Left lung (tissue), 14 donors: ENCODE measurements at regions of chr7 and their contacts with region 1.

Region 1: GRCh38 chr7:101688183-101688831 is 59.2 kb upstream of the MYL10 start:
- DNase-seq: peak; percentile 72 to 96 (median 81)
- ATAC-seq: peak; percentile 96
- H3K4me3 ChIP-seq: peak overlapping the region in 1 of 2 donors; percentile 31
- H3K27ac ChIP-seq: no peak overlapping the region
- H3K4me1 ChIP-seq: peaks cover 8 to 25% of the 10 kb centered on the region in 2 donors
- H3K27me3 ChIP-seq: peaks cover 0 to 4% of the 10 kb centered on the region in 2 donors
- CTCF ChIP-seq: peak; percentile 96 to 97

Region 2: DNA sequence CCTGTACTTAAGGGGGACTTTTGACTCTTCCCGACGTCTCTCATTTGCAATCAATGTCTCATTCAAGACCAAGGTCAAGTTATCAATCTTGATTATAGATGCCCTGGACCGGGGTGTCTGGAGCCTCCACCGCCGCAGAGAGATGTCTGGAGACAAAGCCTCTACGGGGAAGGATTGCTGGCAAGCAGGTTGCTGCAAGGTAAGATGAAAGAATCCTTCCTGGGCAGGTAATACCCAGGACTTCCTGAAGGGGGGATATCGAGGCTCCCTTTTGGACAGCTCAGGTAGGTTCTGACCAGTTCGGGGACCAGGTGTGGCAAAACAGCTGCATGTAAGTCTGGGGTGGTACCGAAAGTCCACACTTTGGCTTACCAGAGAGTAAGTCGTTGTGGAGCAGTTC is 116.7 kb after region 1 on chr7:
- intact Hi-C with region 1: loop called in 1 of 2 experiments (anchors 10 kb)
- DNase-seq: no peak
- ATAC-seq: peak; percentile 65
- H3K4me3 ChIP-seq: no peak overlapping the region
- H3K27ac ChIP-seq: no peak overlapping the region
- H3K4me1 ChIP-seq: peaks cover 0 to 13% of the 10 kb centered on the region in 2 donors
- H3K27me3 ChIP-seq: peaks cover 4 to 31% of the 10 kb centered on the region in 2 donors
- CTCF ChIP-seq: peak; percentile 10 to 17

Region 3: DNA sequence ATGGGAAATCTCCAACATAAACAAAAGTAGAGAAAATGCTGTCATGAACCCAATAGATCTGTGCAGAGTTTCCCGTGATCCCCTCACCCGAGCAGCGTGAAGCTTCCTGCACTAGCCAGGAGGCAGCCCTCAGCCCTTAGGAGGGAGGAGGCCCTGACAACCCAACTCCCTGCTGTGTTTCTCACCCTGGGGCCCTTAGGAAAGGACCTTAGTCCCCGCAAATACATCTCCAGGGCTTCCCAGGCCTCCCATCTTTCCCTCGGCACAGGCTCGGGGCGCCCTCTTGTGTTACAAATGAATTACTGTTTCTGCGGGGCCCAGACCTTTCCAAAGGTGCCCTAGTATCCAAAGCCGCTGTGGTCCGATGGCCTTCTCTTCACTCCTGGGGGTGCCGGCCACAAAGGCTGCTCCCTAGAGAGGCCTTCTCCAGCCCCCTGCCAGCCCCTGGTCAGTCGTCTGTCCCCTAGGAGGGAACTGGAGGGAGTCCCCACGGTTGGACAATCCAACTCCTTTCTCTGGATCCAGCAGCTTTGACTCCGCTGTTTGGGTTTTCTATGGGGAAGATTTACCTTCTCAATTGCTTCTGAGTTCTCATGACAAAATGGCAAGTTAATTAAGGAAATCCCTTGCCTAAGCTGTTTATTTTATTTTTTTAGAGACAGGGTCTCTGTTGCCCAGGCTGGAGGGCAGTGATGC is 548.4 kb after region 1 on chr7:
- intact Hi-C with region 1: loop called in 1 of 2 experiments (anchors 10 kb)
- DNase-seq: peak in 3 of 4 donors; percentile 46 to 82 (median 58)
- ATAC-seq: peak; percentile 89
- H3K4me3 ChIP-seq: no peak overlapping the region
- H3K27ac ChIP-seq: no peak overlapping the region
- H3K4me1 ChIP-seq: no peaks in the 10 kb centered on the region
- H3K27me3 ChIP-seq: no peaks in the 10 kb centered on the region
- CTCF ChIP-seq: peak; percentile 55 to 62